Activated naive CD4-positive, alpha-beta T cell treated with anti-CD3 and anti-CD28 coated beads for 36 hours (primary cell): ENCODE measurements at regions of chr6 and their contacts with region 1.

Region 1: GRCh38 chr6:134161036-134161435 is 108.6 kb upstream of the SLC2A12 start:
- DNase-seq: no peak
- H3K4me3 Mint-ChIP-seq: no peak overlapping the region
- H3K27ac Mint-ChIP-seq: no peak overlapping the region
- H3K4me1 Mint-ChIP-seq: peaks cover 4% of the 10 kb centered on the region
- H3K27me3 Mint-ChIP-seq: no peaks in the 10 kb centered on the region

Region 2: GRCh38 chr6:134822920-134823709 is 662.1 kb after region 1 on chr6:
- CTCF ChIA-PET with region 1: interaction called, 26 read pairs
- intact Hi-C with region 1: loop called (anchors 1 kb)
- DNase-seq: peak; percentile 39
- H3K4me3 Mint-ChIP-seq: no peak overlapping the region
- H3K27ac Mint-ChIP-seq: no peak overlapping the region
- H3K4me1 Mint-ChIP-seq: no peaks in the 10 kb centered on the region
- H3K27me3 Mint-ChIP-seq: no peaks in the 10 kb centered on the region

Region 3: GRCh38 chr6:134882426-134883038 is 721.5 kb after region 1 on chr6:
- CTCF ChIA-PET with region 1: interaction called, 8 read pairs
- intact Hi-C with region 1: loop called (anchors 1 kb)
- DNase-seq: peak; percentile 80
- H3K4me3 Mint-ChIP-seq: no peak overlapping the region
- H3K27ac Mint-ChIP-seq: no peak overlapping the region
- H3K4me1 Mint-ChIP-seq: no peaks in the 10 kb centered on the region
- H3K27me3 Mint-ChIP-seq: peaks cover 10% of the 10 kb centered on the region